ENCODE measurements at regions of chr5 and their contacts with region 1.

Region 1: DNA sequence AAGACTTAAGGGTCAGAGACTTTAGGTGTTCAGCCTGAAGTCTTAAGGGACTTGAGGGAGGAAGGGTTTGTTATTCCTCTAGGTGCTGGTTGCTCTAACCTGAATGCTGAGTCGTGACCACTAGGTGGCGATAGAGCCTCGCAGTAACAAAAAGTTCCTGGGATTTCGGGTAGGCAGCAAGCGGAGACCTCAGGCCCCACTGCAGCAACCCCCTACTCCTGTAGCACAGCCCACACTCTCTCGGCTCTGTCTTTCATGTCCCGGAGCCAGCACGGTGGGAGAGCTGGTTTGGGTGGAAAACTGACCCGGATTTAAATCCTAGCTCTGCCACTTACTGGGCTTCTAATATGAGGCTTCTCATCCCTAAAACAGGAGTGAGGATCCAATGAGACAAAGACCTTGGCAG is 100.3 kb upstream of the PANK3 start:
- DNase-seq: peak; percentile 75
- H3K4me3 ChIP-seq: no peak overlapping the region
- H3K27ac ChIP-seq: no peak overlapping the region
- H3K4me1 ChIP-seq: peaks cover 3% of the 10 kb centered on the region
- H3K27me3 ChIP-seq: no peaks in the 10 kb centered on the region
- CTCF ChIP-seq: peak; percentile 78 to 87
- POLR2A ChIP-seq: no peak

Region 2: GRCh38 chr5:168712280-168712924 is 32.9 kb after region 1 on chr5:
- CTCF ChIA-PET with region 1: interaction called, 4 read pairs
- POLR2A ChIA-PET with region 1: no interaction called
- dilution Hi-C with region 1: no loop called
- intact Hi-C with region 1: loop called (anchors 1 kb)
- DNase-seq: peak; percentile 55
- H3K4me3 ChIP-seq: no peak overlapping the region
- H3K27ac ChIP-seq: peak overlapping the region; percentile 72
- H3K4me1 ChIP-seq: peaks cover 19% of the 10 kb centered on the region
- H3K27me3 ChIP-seq: no peaks in the 10 kb centered on the region
- CTCF ChIP-seq: no peak
- POLR2A ChIP-seq: no peak

Region 3: GRCh38 chr5:168874713-168875380 is 195.3 kb after region 1 on chr5:
- CTCF ChIA-PET with region 1: no interaction called
- POLR2A ChIA-PET with region 1: no interaction called
- dilution Hi-C with region 1: no loop called
- intact Hi-C with region 1: loop called (anchors 2 kb)
- DNase-seq: no peak
- H3K4me3 ChIP-seq: no peak overlapping the region
- H3K27ac ChIP-seq: no peak overlapping the region
- H3K4me1 ChIP-seq: no peaks in the 10 kb centered on the region
- H3K27me3 ChIP-seq: no peaks in the 10 kb centered on the region
- CTCF ChIP-seq: no peak
- POLR2A ChIP-seq: no peak

Region 4: DNA sequence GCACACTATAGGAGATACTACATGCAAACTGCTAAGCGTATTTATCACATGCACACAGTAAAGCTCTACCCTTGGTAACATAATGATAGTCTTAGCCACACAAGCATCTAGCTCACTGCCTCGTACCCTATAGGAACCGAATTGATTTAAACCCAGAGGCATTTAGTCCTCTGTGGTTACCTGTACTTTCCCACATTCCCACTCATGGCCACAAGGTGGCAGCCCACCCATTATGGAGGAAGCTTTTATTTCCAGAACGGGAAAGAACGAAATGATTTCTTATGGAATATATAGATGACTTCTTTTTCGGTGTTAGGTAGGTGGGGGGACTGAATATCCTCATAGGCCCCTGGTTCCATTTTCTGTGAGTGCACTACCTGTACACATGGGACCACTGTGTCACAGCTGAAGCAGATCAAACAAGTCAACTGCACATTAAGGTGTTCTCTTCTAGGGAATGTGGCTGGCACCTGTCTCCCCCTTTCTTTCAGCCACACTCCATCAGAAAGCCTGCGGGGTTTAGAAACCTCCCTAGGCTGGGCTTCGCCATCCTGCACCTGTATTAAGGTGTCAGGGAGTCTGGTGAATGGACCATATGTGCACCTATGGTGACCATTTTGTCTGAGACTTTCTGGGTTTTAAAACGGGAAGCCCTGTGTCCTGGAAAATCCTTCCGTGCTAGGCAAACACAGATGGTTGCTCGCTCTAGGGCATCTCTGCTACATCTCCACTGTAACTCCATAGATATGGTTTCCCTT is 308.2 kb after region 1 on chr5:
- CTCF ChIA-PET with region 1: no interaction called
- POLR2A ChIA-PET with region 1: no interaction called
- dilution Hi-C with region 1: no loop called
- intact Hi-C with region 1: loop called (anchors 1 kb)
- DNase-seq: peak; percentile 67
- H3K4me3 ChIP-seq: no peak overlapping the region
- H3K27ac ChIP-seq: no peak overlapping the region
- H3K4me1 ChIP-seq: no peaks in the 10 kb centered on the region
- H3K27me3 ChIP-seq: peaks cover 0 to 6% of the 10 kb centered on the region in 2 experiments
- CTCF ChIP-seq: peak; percentile 67 to 81
- POLR2A ChIP-seq: no peak

Region 5: DNA sequence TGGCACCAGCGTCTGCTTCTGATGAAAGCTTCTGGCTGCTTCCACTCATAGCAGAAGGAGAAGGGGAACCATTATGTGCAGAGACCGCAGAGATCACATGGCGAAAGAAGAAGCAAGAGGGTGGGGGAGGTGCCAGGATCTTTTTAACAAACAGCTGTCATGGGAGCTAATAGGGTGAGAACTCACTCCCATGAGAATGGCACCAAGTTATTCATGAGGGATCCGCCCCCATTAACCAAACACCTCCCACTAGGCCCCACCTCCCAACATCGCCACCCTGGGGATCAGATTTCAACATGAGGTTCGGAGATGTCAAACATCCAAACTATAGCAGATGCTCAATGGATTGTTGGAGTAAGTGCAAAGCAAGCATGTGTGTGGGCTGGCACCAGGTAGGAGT is 747.3 kb after region 1 on chr5:
- CTCF ChIA-PET with region 1: no interaction called
- POLR2A ChIA-PET with region 1: no interaction called
- dilution Hi-C with region 1: no loop called
- intact Hi-C with region 1: no loop called
- DNase-seq: no peak
- H3K4me3 ChIP-seq: no peak overlapping the region
- H3K27ac ChIP-seq: no peak overlapping the region
- H3K4me1 ChIP-seq: no peaks in the 10 kb centered on the region
- H3K27me3 ChIP-seq: no peaks in the 10 kb centered on the region
- CTCF ChIP-seq: no peak
- POLR2A ChIP-seq: no peak